IMR-90 (cell line): ENCODE measurements at regions of chr2 and their contacts with region 1.

Region 1: GRCh38 chr2:230160112-230160660 is 59.6 kb downstream of the SP110 start:
- DNase-seq: peak; percentile 47
- ATAC-seq: peak; percentile 80
- H3K4me3 ChIP-seq: no peak overlapping the region
- H3K27ac ChIP-seq: no peak overlapping the region
- H3K4me1 ChIP-seq: no peaks in the 10 kb centered on the region
- H3K27me3 ChIP-seq: no peaks in the 10 kb centered on the region
- CTCF ChIP-seq: peak; percentile 83
- POLR2A ChIP-seq: no peak
- RAD21 ChIP-seq: peak; percentile 77

Region 2: DNA sequence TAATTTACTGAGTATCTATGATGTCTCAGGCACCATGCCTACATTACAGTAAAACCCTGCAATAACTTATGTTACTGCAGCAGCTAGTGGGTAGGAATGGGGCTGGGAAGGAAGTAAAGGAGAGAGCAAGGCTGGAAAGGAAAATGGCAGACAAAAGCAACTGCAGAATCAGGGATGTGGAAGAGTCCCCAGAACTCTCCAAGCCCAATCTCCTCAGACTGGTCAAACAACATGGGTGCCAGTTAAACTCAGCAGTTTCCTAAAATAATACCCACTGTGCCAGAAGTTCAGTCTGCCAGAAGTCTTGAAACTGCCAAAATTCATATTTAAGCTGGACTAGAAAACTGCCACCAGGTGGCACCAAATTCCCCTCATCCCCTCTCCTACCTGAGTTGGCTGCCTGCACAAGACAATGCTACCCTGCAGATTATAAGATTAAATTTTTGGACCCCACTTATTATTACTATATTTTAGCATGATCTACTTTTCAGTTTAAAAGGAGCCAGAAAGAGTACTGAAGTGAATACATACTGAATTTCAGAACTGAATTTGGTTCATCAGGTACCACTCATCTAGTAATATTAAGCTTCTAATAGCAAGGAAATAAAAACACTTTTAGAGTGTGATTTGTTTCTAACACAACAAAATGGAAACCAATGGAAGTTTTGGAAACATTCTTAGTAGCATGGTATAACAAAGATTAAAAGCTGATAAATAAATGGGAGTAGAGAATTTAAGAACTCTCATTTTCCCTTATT is 359.0 kb before region 1 on chr2:
- CTCF ChIA-PET with region 1: interaction called, 3 read pairs
- POLR2A ChIA-PET with region 1: no interaction called
- dilution Hi-C with region 1: no loop called
- in situ Hi-C with region 1: loop called (anchors 25 kb)
- intact Hi-C with region 1: loop called (anchors 10 kb)
- DNase-seq: peak; percentile 65
- ATAC-seq: peak; percentile 45
- H3K4me3 ChIP-seq: no peak overlapping the region
- H3K27ac ChIP-seq: peak overlapping the region; percentile 45; the same call in 1 of the 2 replicates
- H3K4me1 ChIP-seq: peaks cover 2% of the 10 kb centered on the region; the same call in 1 of the 2 replicates
- H3K27me3 ChIP-seq: no peaks in the 10 kb centered on the region
- CTCF ChIP-seq: peak; percentile 63
- POLR2A ChIP-seq: no peak
- RAD21 ChIP-seq: peak; percentile 56

Region 3: GRCh38 chr2:229921892-229922445 is 238.2 kb before region 1 on chr2 and contains the start of gene TRIP12:
- CTCF ChIA-PET with region 1: no interaction called
- POLR2A ChIA-PET with region 1: no interaction called
- dilution Hi-C with region 1: no loop called
- in situ Hi-C with region 1: no loop called
- intact Hi-C with region 1: loop called (anchors 5 kb)
- DNase-seq: peak; percentile 98
- ATAC-seq: peak; percentile 90
- H3K4me3 ChIP-seq: peak within 1 kb of the TSS; percentile 75
- H3K27ac ChIP-seq: peak within 1 kb of the TSS; percentile 92
- H3K4me1 ChIP-seq: 0 out of 2 replicates have a peak, but pooled peaks cover 2% of the 10 kb centered on the region
- H3K27me3 ChIP-seq: no peaks in the 10 kb centered on the region
- CTCF ChIP-seq: no peak
- POLR2A ChIP-seq: no peak
- RAD21 ChIP-seq: no peak
- total RNA-seq, gene TRIP12: 209 and 315 TPM in 2 replicates

Region 4: DNA sequence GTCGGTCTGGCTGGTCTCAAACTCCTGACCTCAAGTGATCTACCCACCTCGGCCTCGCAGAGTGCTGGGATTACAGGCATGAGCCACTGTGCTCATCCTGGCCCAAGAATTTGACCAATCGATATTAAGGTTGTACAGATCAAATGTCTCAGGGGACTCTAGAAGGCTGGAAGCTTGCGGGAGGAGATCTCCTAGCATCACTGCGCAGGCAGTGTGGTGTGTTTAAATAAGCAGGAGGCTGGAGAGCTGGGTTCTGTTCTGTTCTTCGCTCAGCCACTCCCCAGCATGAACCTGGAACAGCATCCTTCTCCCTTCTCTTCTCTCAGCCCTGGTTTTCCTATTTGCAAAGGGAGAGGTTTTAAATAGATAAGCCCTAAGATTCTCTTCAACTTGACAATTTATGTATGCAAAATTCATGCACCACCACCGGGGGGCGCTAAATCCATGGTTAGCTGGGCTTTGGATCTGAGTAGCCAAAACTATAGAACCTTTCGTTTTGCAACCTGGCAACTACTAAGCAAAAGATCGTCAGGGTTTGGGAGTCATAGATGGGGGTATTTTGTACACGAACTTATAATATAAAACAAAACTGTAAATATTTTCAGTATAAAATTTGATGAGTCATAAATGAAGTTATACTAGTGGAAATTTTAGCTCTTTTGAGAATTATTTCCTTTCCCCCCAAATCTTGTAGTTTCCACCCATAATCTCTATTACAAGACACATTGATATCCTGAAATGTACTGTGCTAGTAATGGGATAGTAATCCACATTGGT is 152.1 kb before region 1 on chr2:
- CTCF ChIA-PET with region 1: interaction called, 19 read pairs
- POLR2A ChIA-PET with region 1: no interaction called
- dilution Hi-C with region 1: no loop called
- in situ Hi-C with region 1: loop called (anchors 5 kb)
- intact Hi-C with region 1: loop called (anchors 1 kb)
- DNase-seq: peak; percentile 71
- ATAC-seq: peak; percentile 52
- H3K4me3 ChIP-seq: no peak overlapping the region
- H3K27ac ChIP-seq: no peak overlapping the region
- H3K4me1 ChIP-seq: peaks cover 15% of the 10 kb centered on the region
- H3K27me3 ChIP-seq: no peaks in the 10 kb centered on the region
- CTCF ChIP-seq: peak; percentile 88
- POLR2A ChIP-seq: peak; percentile 34; the same call in 1 of the 2 replicates
- RAD21 ChIP-seq: peak; percentile 88

Region 5: GRCh38 chr2:230048010-230048671 is 112.0 kb before region 1 on chr2:
- CTCF ChIA-PET with region 1: no interaction called
- POLR2A ChIA-PET with region 1: no interaction called
- dilution Hi-C with region 1: no loop called
- in situ Hi-C with region 1: no loop called
- intact Hi-C with region 1: no loop called
- DNase-seq: no peak
- ATAC-seq: no peak
- H3K4me3 ChIP-seq: no peak overlapping the region
- H3K27ac ChIP-seq: no peak overlapping the region
- H3K4me1 ChIP-seq: no peaks in the 10 kb centered on the region
- H3K27me3 ChIP-seq: no peaks in the 10 kb centered on the region
- CTCF ChIP-seq: no peak
- POLR2A ChIP-seq: no peak
- RAD21 ChIP-seq: no peak

Region 6: DNA sequence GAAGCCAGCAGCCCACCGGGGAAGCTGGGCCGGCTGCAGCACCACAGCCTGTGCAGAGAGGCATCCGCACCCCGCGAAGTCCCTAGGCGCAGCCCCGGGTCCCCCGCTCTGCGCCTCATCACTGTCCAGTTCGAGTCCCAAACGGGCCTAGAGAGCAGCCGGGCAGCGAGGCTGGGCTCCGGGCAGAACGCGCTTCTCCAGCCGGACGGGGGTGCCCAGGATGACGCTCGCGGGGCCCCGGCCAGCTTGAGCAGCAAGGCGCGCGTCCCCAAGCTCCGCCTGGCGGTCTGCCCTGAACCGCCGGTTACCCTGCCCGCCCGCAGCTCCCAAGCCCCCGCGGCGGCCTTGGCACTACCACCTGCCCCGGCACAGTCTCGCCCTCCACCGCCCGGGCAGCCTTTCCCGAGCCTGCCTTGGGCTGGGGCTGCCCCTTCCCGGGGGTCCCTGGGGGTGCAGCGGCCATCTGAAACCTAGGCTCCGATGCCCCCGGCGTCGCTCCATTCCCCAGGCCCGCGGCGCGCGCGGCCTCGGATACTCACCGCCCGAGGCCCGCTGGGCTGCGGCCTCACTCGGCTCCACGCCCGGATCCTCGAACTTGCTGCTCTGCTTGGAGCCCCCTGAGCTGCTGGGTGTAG is 92.1 kb before region 1 on chr2:
- CTCF ChIA-PET with region 1: interaction called, 4 read pairs
- POLR2A ChIA-PET with region 1: no interaction called
- dilution Hi-C with region 1: no loop called
- in situ Hi-C with region 1: no loop called
- intact Hi-C with region 1: loop called (anchors 1 kb)
- DNase-seq: peak; percentile 13
- ATAC-seq: peak; percentile 61
- H3K4me3 ChIP-seq: peak overlapping the region; percentile 46
- H3K27ac ChIP-seq: peak overlapping the region; percentile 39
- H3K4me1 ChIP-seq: no peaks in the 10 kb centered on the region
- H3K27me3 ChIP-seq: peaks cover 3% of the 10 kb centered on the region; the same call in 1 of the 2 replicates
- CTCF ChIP-seq: no peak
- POLR2A ChIP-seq: no peak
- RAD21 ChIP-seq: no peak

Region 7: GRCh38 chr2:230254152-230254881 is 94.1 kb after region 1 on chr2:
- CTCF ChIA-PET with region 1: no interaction called
- POLR2A ChIA-PET with region 1: no interaction called
- dilution Hi-C with region 1: no loop called
- in situ Hi-C with region 1: no loop called
- intact Hi-C with region 1: no loop called
- DNase-seq: no peak
- ATAC-seq: no peak
- H3K4me3 ChIP-seq: no peak overlapping the region
- H3K27ac ChIP-seq: no peak overlapping the region
- H3K4me1 ChIP-seq: no peaks in the 10 kb centered on the region
- H3K27me3 ChIP-seq: peaks cover 4% of the 10 kb centered on the region; the same call in 1 of the 2 replicates
- CTCF ChIP-seq: no peak
- POLR2A ChIP-seq: no peak
- RAD21 ChIP-seq: no peak

Region 8: GRCh38 chr2:230296917-230297316 is 136.7 kb after region 1 on chr2:
- CTCF ChIA-PET with region 1: no interaction called
- POLR2A ChIA-PET with region 1: no interaction called
- dilution Hi-C with region 1: no loop called
- in situ Hi-C with region 1: no loop called
- intact Hi-C with region 1: no loop called
- DNase-seq: no peak
- ATAC-seq: no peak
- H3K4me3 ChIP-seq: no peak overlapping the region
- H3K27ac ChIP-seq: no peak overlapping the region
- H3K4me1 ChIP-seq: no peaks in the 10 kb centered on the region
- H3K27me3 ChIP-seq: peaks cover 1% of the 10 kb centered on the region; the same call in 1 of the 2 replicates
- CTCF ChIP-seq: no peak
- POLR2A ChIP-seq: no peak
- RAD21 ChIP-seq: no peak